ENCODE measurements at regions of chr19 and their contacts with region 1.

Region 1: DNA sequence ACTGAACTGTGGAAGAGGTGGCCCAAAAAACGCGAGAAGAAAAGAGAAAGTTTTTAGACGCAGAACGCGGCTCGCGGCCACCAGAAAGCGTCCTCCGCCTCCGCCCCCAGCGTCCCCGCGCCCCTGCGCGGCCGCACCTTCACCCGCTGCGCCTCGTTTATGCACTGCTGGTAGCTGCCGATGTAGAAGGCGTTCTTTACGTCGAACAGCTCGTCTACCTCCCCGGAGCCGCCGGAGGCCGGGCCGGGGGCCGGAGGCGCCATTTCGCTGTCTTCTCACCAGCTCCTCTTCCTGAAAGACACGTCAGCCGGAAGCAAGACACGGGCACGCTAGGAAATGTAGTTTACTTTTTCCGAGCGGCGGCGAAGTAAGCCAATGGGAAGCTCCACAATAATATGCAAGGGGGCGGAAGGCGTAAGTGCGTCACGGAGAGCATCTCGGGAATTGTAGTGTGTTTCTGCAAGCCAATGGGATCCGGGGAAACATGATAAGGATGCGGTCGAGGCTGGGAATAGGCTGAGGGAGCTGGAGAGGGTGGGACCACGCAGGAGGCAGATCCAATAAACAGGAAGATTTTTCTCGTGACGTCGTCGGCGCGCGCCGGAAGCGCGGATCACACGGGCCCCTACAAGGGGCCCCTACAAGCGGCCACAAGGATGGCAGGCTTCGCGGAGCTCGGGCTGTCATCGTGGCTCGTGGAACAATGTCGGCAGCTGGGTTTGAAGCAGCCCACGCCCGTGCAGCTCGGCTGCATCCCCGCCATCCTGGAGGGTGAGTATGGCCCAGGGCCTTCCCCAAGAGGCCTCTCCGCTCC is at the starts of genes COPE and DDX49:
- DNase-seq: peak; percentile 94
- ATAC-seq: peak; percentile 96
- H3K4me3 Mint-ChIP-seq: peak within 1 kb of the TSS; percentile 91
- H3K27ac Mint-ChIP-seq: peak within 1 kb of the TSS; percentile 60
- H3K4me1 Mint-ChIP-seq: peaks cover 46% of the 10 kb centered on the region
- H3K27me3 Mint-ChIP-seq: no peaks in the 10 kb centered on the region
- CTCF ChIP-seq: no peak
- total RNA-seq, gene COPE: 182 and 253 TPM in 2 replicates
- total RNA-seq, gene DDX49: 49.0 and 53.6 TPM in 2 replicates

Region 2: DNA sequence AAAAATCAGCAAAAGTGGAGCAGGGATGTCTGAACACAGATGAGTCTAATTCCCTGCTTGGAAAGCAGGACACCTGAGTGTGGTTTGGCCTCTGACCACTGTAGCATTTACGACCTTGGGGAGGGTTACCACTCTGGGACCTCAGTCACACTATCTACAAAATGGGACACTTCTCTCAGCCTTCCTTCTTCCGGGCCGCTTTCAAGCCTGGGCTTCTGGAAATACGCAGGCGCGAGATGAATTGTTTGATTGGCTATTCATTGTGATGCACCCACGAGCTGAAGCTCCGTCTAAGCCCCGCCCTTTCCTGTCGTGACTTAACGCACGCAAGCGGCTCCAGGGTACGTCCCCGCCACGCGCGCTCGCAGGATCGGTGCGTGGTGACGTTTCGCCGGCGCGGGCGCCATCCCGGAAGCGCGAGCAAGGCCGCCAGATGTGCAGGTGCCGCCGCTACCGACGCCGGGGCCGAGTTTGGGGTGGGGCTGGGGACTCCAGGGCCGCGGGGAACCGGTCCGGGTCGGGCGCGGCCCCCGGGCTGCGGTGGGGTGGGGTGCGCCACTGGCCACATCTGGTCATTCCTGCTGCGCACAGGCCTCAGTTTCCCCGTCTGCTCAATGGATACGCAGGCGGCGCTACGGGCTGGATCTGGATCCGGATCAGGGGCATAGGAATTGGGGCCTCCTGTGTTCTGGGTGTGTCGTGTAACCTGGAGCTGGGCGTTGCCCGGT is 361.7 kb before region 1 on chr19 and contains the start of gene KXD1:
- CTCF ChIA-PET with region 1: interaction called, 3 read pairs
- POLR2A ChIA-PET with region 1: interaction called, 16 read pairs
- intact Hi-C with region 1: no loop called
- DNase-seq: peak; percentile 93
- ATAC-seq: peak; percentile 99
- H3K4me3 Mint-ChIP-seq: peak within 1 kb of the TSS; percentile 87
- H3K27ac Mint-ChIP-seq: peak within 1 kb of the TSS; percentile 89
- H3K4me1 Mint-ChIP-seq: peaks cover 25% of the 10 kb centered on the region
- H3K27me3 Mint-ChIP-seq: no peaks in the 10 kb centered on the region
- CTCF ChIP-seq: no peak
- total RNA-seq, gene KXD1: 82.2 and 88.8 TPM in 2 replicates

Region 3: DNA sequence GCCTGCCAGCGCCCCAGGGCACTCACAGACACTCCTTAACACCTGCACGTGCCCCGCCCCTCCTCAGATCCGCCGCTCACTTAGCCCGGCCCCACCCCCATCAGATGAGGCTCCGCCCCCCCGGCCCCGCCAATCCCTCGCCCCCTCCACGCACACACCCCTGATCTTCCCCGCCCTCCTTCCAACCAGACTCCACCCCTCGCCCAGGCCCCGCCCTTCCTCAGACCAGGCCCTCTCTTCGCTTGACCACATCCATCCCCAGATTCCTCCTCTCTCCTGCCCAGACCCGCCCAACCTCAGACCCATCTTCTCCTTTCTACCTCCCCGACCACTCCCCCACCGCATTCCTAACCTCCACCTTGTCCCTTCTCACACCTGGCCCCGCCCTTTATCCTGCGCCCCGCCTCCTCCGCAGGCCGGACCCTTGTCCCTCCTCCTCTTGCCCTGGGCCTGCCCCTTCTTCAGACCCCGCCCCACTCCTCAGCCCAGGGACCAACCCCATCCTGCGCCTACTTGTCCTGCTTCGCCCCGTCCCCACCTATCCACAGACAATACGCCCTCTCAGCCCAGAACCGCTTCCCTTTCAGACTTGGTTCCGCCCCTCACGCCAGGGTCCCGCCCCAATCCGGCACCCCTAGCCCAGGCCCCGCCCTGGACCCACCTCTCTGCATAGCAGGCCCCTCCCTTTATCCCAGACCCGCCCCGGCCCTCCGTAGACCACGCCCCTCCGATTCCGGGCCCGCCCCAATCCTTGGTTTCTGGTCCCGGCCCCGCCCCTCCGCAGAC is 282.9 kb before region 1 on chr19:
- CTCF ChIA-PET with region 1: no interaction called
- POLR2A ChIA-PET with region 1: no interaction called
- intact Hi-C with region 1: loop called (anchors 1 kb)
- DNase-seq: peak; percentile 99
- ATAC-seq: peak; percentile 86
- H3K4me3 Mint-ChIP-seq: peak overlapping the region; percentile 88
- H3K27ac Mint-ChIP-seq: peak overlapping the region; percentile 84
- H3K4me1 Mint-ChIP-seq: peaks cover 23% of the 10 kb centered on the region
- H3K27me3 Mint-ChIP-seq: no peaks in the 10 kb centered on the region
- CTCF ChIP-seq: no peak

Region 4: DNA sequence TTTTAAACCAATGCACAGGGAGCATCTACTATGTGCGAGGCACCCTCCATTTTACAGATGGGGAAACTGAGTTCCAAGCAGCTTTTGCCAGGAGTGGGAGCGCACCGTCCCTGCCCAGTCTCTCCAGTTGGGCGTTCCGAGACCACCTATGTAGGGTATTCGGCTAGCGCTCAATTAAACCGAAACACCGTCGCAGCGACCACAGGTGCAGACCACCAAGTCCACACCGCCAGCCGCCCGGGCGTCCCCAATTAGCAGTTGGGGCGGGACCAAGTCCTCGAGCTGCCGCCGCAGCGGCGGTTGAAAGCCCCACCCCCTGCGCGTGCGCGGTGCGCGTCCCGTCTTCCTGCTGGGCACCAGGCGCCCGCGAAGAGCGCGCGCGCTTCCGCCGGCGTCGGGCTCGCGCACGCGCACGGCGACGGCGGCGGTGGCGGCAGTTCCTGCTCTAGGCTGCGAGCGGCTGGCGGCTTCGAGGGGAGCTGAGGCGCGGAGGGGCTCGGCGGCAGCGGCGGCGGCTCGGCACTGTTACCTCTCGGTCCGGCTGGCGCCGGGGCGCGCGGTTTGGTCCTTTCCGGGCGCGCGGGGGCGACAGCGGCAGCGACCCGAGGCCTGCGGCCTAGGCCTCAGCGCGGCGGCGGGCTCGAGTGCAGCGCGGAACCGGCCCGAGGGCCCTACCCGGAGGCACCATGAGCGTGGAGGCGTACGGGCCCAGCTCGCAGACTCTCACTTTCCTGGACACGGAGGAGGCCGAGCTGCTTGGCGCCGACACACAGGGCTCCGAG is 87.6 kb before region 1 on chr19 and contains the start of gene UPF1:
- CTCF ChIA-PET with region 1: no interaction called
- POLR2A ChIA-PET with region 1: interaction called, 11 read pairs
- intact Hi-C with region 1: loop called (anchors 1 kb)
- DNase-seq: peak; percentile 97
- ATAC-seq: peak; percentile 84
- H3K4me3 Mint-ChIP-seq: peak within 1 kb of the TSS; percentile 90
- H3K27ac Mint-ChIP-seq: peak within 1 kb of the TSS; percentile 77
- H3K4me1 Mint-ChIP-seq: peaks cover 35% of the 10 kb centered on the region
- H3K27me3 Mint-ChIP-seq: no peaks in the 10 kb centered on the region
- CTCF ChIP-seq: no peak
- total RNA-seq, gene UPF1: 93.2 and 107 TPM in 2 replicates

Region 5: GRCh38 chr19:19033426-19034203 is 114.3 kb after region 1 on chr19 and contains the starts of genes ARMC6 and SUGP2:
- CTCF ChIA-PET with region 1: no interaction called
- POLR2A ChIA-PET with region 1: no interaction called
- intact Hi-C with region 1: loop called (anchors 1 kb)
- DNase-seq: peak; percentile 94
- ATAC-seq: peak; percentile 76
- H3K4me3 Mint-ChIP-seq: peak within 1 kb of the TSS; percentile 92
- H3K27ac Mint-ChIP-seq: peak within 1 kb of the TSS; percentile 91
- H3K4me1 Mint-ChIP-seq: peaks cover 31% of the 10 kb centered on the region
- H3K27me3 Mint-ChIP-seq: no peaks in the 10 kb centered on the region
- CTCF ChIP-seq: no peak
- total RNA-seq, gene ARMC6: 33.3 and 37.9 TPM in 2 replicates
- total RNA-seq, gene SUGP2: 121 and 122 TPM in 2 replicates

Region 6: DNA sequence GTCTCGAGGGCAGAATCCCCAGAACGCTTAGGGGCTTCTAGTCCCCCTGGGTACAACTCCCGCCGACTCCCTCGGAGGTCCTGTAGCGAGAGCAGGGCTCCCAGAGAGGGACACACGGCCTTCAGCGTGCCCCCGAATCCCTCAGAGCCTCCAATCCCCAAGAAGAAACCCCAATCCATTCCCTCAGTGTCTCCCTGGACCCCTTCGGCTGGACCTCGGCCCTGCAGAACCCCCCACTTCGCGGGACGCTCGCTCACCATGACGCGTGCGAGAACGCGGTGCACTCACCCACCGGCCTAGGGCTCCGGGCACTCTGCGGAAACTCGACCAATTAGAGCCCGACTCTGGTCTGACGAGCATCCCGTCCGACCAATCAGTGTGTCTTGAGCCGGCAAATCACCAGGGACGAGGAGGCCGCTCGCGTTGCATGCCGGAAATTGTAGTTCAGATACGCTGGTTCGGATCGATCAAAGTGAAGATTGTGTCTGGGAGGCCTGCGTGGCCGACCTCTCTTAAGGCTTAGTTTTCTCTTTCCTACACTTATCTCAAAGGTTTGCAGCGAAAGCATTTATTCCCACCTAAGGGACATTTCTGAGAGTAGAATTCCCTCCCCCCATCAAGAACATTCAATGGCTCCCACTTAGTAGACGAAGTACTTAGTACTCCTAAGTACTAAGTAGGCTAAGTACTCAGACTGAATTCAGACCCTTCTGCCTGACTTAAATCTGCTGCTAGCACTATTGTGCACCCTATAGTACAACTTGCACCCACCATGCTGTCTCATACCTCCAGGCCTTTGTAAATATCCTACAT is 219.1 kb after region 1 on chr19 and contains the start of gene TMEM161A:
- CTCF ChIA-PET with region 1: no interaction called
- POLR2A ChIA-PET with region 1: no interaction called
- intact Hi-C with region 1: loop called (anchors 10 kb)
- DNase-seq: peak; percentile 90
- ATAC-seq: peak; percentile 99
- H3K4me3 Mint-ChIP-seq: peak within 1 kb of the TSS; percentile 98
- H3K27ac Mint-ChIP-seq: peak within 1 kb of the TSS; percentile 90
- H3K4me1 Mint-ChIP-seq: peaks cover 30% of the 10 kb centered on the region
- H3K27me3 Mint-ChIP-seq: no peaks in the 10 kb centered on the region
- CTCF ChIP-seq: no peak
- total RNA-seq, gene TMEM161A: 20.8 and 22.6 TPM in 2 replicates

Region 7: DNA sequence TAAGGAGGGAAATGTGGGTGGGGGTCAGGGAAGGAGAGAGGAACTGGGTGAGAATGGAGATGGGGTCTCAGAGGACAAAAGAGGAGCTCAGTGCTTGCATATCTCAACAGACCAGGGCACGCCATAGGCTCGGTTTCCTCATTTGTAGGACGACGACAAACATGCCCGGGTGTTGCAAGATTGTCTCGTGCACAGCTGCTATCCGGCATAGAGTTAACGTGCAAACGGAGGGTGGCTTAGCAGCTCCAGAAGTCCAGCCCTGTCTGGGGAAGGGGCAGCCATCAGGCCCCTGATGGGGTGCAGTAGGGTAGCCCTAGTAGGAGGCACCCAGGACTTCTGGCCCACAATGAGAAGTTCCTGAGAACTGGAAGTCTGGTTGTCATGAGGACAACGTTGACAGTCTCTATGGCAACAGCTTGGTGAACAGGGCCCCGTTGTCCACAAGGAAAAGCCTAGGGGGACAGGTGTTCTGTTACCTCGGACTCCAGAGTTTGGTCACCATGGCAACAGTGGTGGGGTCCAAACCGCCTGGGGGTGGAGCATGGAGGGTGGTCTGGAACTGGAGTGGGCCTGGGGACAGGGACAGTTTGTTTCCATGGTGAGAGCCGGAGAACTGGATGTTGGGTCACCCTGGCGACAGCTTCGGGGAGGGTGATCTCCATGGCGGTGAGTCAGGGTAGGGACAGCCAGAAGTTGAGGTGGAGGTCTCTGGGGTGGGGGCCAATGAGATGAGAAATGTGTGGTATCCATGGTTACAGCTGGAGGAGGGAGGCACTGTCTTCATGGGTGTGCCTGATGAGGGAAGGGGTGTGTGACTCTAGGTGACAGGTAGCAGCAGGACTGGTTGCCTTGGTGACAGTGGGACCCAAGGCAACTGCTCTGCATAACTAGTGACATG is 337.0 kb after region 1 on chr19:
- CTCF ChIA-PET with region 1: no interaction called
- POLR2A ChIA-PET with region 1: no interaction called
- intact Hi-C with region 1: no loop called
- DNase-seq: no peak
- ATAC-seq: no peak
- H3K4me3 Mint-ChIP-seq: no peak overlapping the region
- H3K27ac Mint-ChIP-seq: no peak overlapping the region
- H3K4me1 Mint-ChIP-seq: peaks cover 7% of the 10 kb centered on the region
- H3K27me3 Mint-ChIP-seq: peaks cover 46% of the 10 kb centered on the region
- CTCF ChIP-seq: no peak

Region 8: DNA sequence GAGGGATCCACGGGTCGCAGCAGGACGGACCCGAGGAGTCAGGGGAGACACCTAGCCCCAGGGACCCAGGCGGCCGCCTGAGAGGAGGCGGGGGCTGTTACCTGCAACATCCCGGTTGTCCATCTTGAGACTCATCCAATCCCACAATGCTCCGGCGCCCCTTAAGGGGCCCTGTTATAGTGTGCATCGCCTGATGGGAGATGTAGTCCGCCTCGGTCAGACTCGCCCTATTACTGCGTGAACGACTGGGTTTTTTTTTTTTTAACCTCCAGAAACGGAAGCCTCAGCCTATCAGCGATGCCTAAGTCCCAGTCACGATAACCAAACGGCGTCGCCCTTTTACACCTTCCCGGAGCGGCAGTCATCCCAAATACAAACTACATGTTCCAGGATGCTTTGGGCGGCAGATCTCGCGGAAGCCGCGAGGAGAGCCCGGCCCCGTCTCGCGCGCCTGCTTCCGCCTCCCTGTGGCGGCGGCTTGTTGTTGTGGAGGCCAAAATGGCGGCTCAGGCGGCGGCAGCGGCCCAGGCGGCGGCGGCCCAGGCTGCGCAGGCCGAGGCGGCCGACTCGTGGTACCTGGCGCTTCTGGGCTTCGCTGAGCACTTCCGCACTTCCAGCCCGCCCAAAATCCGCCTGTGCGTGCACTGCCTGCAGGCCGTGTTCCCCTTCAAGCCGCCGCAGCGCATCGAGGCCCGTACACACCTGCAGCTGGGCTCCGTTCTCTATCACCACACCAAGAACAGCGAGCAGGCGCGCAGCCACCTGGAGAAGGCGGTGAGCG is 401.3 kb after region 1 on chr19 and contains the starts of genes MAU2 and SUGP1:
- CTCF ChIA-PET with region 1: no interaction called
- POLR2A ChIA-PET with region 1: no interaction called
- intact Hi-C with region 1: loop called (anchors 1 kb)
- DNase-seq: peak; percentile 82
- ATAC-seq: peak; percentile 92
- H3K4me3 Mint-ChIP-seq: peak within 1 kb of the TSS; percentile 98
- H3K27ac Mint-ChIP-seq: peak within 1 kb of the TSS; percentile 100
- H3K4me1 Mint-ChIP-seq: peaks cover 42% of the 10 kb centered on the region
- H3K27me3 Mint-ChIP-seq: no peaks in the 10 kb centered on the region
- CTCF ChIP-seq: no peak
- total RNA-seq, gene MAU2: 107 and 126 TPM in 2 replicates
- total RNA-seq, gene SUGP1: 68.6 and 73.0 TPM in 2 replicates

Measured in activated B cell treated with CpG ODN at 0.5 μM for 24 hours (primary cell).